ENCODE measurements at regions of chr19 and their contacts with region 1.

Region 1: GRCh38 chr19:18675779-18676178 is 7.7 kb upstream of the CRTC1 start:
- DNase-seq: no peak
- ATAC-seq: no peak
- H3K4me3 ChIP-seq: no peak overlapping the region
- H3K27ac ChIP-seq: no peak overlapping the region
- H3K4me1 ChIP-seq: peaks cover 29 to 57% of the 10 kb centered on the region in 2 donors
- H3K27me3 ChIP-seq: no peaks in the 10 kb centered on the region
- CTCF ChIP-seq: peak in 4 of 5 experiments; percentile 13 to 55 (median 25)
- POLR2A ChIP-seq: no peak

Region 2: GRCh38 chr19:18594096-18594823 is 81.5 kb before region 1 on chr19:
- in situ Hi-C with region 1: loop called in 1 of 4 experiments (anchors 10 kb)
- intact Hi-C with region 1: loop called (anchors 2 kb)
- DNase-seq: peak; percentile 30 to 57
- ATAC-seq: peak; percentile 51 to 57
- H3K4me3 ChIP-seq: peak overlapping the region; percentile 34 to 54 (median 46)
- H3K27ac ChIP-seq: peak overlapping the region in 2 of 4 donors; percentile 13 to 32
- H3K4me1 ChIP-seq: peaks cover 24 to 26% of the 10 kb centered on the region in 2 donors
- H3K27me3 ChIP-seq: no peaks in the 10 kb centered on the region
- CTCF ChIP-seq: peak; percentile 81 to 93 (median 91)
- POLR2A ChIP-seq: no peak

Measured in gastrocnemius medialis (tissue), 4 donors.